ENCODE measurements at regions of chr3 and their contacts with region 1.

Region 1: GRCh38 chr3:128879125-128879969 is at the start of gene ACAD9:
- DNase-seq: peak; percentile 92 to 99 (median 96)
- ATAC-seq: peak; percentile 87
- H3K4me3 ChIP-seq: peak within 1 kb of the TSS; percentile 94
- H3K4me3 Mint-ChIP-seq: peak within 1 kb of the TSS; percentile 88
- H3K27ac ChIP-seq: peak within 1 kb of the TSS; percentile 91 to 99
- H3K27ac Mint-ChIP-seq: peak within 1 kb of the TSS; percentile 92
- H3K4me1 ChIP-seq: peaks cover 56% of the 10 kb centered on the region
- H3K4me1 Mint-ChIP-seq: peaks cover 74% of the 10 kb centered on the region
- H3K27me3 ChIP-seq: no peaks in the 10 kb centered on the region
- H3K27me3 Mint-ChIP-seq: no peaks in the 10 kb centered on the region
- CTCF ChIP-seq: no peak
- total RNA-seq, gene ACAD9: 64.8 to 71.6 TPM

Region 2: GRCh38 chr3:128650096-128651050 is 229.0 kb before region 1 on chr3 and contains the start of gene RPN1:
- CTCF ChIA-PET with region 1: no interaction called
- POLR2A ChIA-PET with region 1: interaction called, 7 read pairs
- intact Hi-C with region 1: loop called in 1 of 2 experiments (anchors 2 kb)
- DNase-seq: peak; percentile 89 to 97 (median 94)
- ATAC-seq: peak; percentile 96
- H3K4me3 ChIP-seq: peak within 1 kb of the TSS; percentile 99
- H3K4me3 Mint-ChIP-seq: peak within 1 kb of the TSS; percentile 95
- H3K27ac ChIP-seq: peak within 1 kb of the TSS; percentile 89 to 93
- H3K27ac Mint-ChIP-seq: peak within 1 kb of the TSS; percentile 90
- H3K4me1 ChIP-seq: peaks cover 29% of the 10 kb centered on the region
- H3K4me1 Mint-ChIP-seq: peaks cover 45% of the 10 kb centered on the region
- H3K27me3 ChIP-seq: no peaks in the 10 kb centered on the region
- H3K27me3 Mint-ChIP-seq: no peaks in the 10 kb centered on the region
- CTCF ChIP-seq: no peak
- total RNA-seq, gene RPN1: 67.7 to 72.6 TPM

Region 3: GRCh38 chr3:128804017-128804810 is 75.1 kb before region 1 on chr3:
- CTCF ChIA-PET with region 1: no interaction called
- POLR2A ChIA-PET with region 1: interaction called, 10 read pairs
- intact Hi-C with region 1: no loop called
- DNase-seq: peak in 11 of 14 experiments; percentile 26 to 93 (median 44)
- ATAC-seq: peak; percentile 92
- H3K4me3 ChIP-seq: peak overlapping the region; percentile 44
- H3K4me3 Mint-ChIP-seq: peak overlapping the region; percentile 75
- H3K27ac ChIP-seq: peak overlapping the region; percentile 86 to 87
- H3K27ac Mint-ChIP-seq: peak overlapping the region; percentile 96
- H3K4me1 ChIP-seq: peaks cover 50% of the 10 kb centered on the region
- H3K4me1 Mint-ChIP-seq: peaks cover 81% of the 10 kb centered on the region
- H3K27me3 ChIP-seq: no peaks in the 10 kb centered on the region
- H3K27me3 Mint-ChIP-seq: no peaks in the 10 kb centered on the region
- CTCF ChIP-seq: no peak

Region 4: DNA sequence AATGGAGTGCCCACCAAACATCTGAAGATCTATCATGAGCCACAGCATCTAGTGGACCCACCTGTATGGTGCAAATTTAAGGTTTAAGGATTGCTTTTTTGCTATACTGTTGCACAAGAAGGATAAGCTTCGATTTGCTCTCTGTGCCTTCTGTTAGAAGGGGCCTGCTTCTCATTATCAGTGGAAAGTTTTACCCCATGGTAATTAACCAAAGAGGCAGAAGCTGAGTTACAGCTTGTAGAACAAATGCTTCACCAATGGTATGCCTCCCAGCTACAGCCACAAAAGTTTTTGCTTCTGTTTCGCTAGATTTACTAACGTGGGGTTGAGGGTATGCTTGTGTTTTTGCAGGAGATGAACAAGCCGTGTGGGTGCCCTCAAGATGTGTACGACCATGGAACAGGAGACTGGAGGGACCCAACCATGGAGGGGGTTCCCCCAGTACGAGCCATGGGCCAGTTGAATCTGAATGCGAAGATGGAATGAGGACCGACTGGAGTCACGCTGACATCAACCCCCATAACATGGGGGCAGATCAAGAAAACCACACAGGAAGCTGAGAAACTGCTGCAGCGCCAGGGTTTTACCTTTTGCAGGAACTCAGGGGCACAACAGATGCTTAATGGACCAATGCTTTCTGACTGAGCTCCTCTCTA is 43.6 kb after region 1 on chr3:
- CTCF ChIA-PET with region 1: interaction called, 15 read pairs
- POLR2A ChIA-PET with region 1: interaction called, 29 read pairs
- intact Hi-C with region 1: loop called (anchors 1 kb)
- DNase-seq: peak; percentile 26 to 72 (median 44)
- ATAC-seq: peak; percentile 74
- H3K4me3 ChIP-seq: peak overlapping the region; percentile 43
- H3K4me3 Mint-ChIP-seq: peak overlapping the region; percentile 78
- H3K27ac ChIP-seq: peak overlapping the region in 1 of 2 donors; percentile 22
- H3K27ac Mint-ChIP-seq: peak overlapping the region; percentile 88
- H3K4me1 ChIP-seq: peaks cover 27% of the 10 kb centered on the region
- H3K4me1 Mint-ChIP-seq: peaks cover 43% of the 10 kb centered on the region
- H3K27me3 ChIP-seq: no peaks in the 10 kb centered on the region
- H3K27me3 Mint-ChIP-seq: no peaks in the 10 kb centered on the region
- CTCF ChIP-seq: no peak

Region 5: GRCh38 chr3:129249276-129250065 is 370.1 kb after region 1 on chr3 and contains the start of gene COPG1:
- CTCF ChIA-PET with region 1: interaction called, 3 read pairs
- POLR2A ChIA-PET with region 1: no interaction called
- intact Hi-C with region 1: loop called (anchors 2 to 5 kb)
- DNase-seq: peak; percentile 72 to 94 (median 86)
- ATAC-seq: peak; percentile 85
- H3K4me3 ChIP-seq: peak within 1 kb of the TSS; percentile 100
- H3K4me3 Mint-ChIP-seq: peak within 1 kb of the TSS; percentile 98
- H3K27ac ChIP-seq: peak within 1 kb of the TSS; percentile 79 to 88
- H3K27ac Mint-ChIP-seq: peak within 1 kb of the TSS; percentile 97
- H3K4me1 ChIP-seq: peaks cover 47% of the 10 kb centered on the region
- H3K4me1 Mint-ChIP-seq: peaks cover 55% of the 10 kb centered on the region
- H3K27me3 ChIP-seq: no peaks in the 10 kb centered on the region
- H3K27me3 Mint-ChIP-seq: no peaks in the 10 kb centered on the region
- CTCF ChIP-seq: no peak
- total RNA-seq, gene COPG1: 77.7 to 79.3 TPM

Measured in CD4-positive, alpha-beta T cell (primary cell).